CD4-positive, alpha-beta T cell (primary cell): ENCODE measurements at regions of chr11 and their contacts with region 1.

Region 1: GRCh38 chr11:65569973-65570918 is at the start of gene ZNRD2:
- DNase-seq: peak; percentile 96 to 100 (median 98)
- ATAC-seq: peak; percentile 71
- H3K4me3 ChIP-seq: peak within 1 kb of the TSS; percentile 89
- H3K4me3 Mint-ChIP-seq: peak within 1 kb of the TSS; percentile 100
- H3K27ac ChIP-seq: peak within 1 kb of the TSS; percentile 99 to 100
- H3K27ac Mint-ChIP-seq: peak within 1 kb of the TSS; percentile 98
- H3K4me1 ChIP-seq: peaks cover 87% of the 10 kb centered on the region
- H3K4me1 Mint-ChIP-seq: peaks cover 86% of the 10 kb centered on the region
- H3K27me3 ChIP-seq: no peaks in the 10 kb centered on the region
- H3K27me3 Mint-ChIP-seq: no peaks in the 10 kb centered on the region
- CTCF ChIP-seq: no peak
- total RNA-seq, gene ZNRD2: 38.7 to 39.9 TPM

Region 2: GRCh38 chr11:65141896-65142494 is 428.3 kb before region 1 on chr11:
- CTCF ChIA-PET with region 1: no interaction called
- POLR2A ChIA-PET with region 1: no interaction called
- intact Hi-C with region 1: no loop called
- DNase-seq: no peak
- ATAC-seq: no peak
- H3K4me3 ChIP-seq: no peak overlapping the region
- H3K4me3 Mint-ChIP-seq: no peak overlapping the region
- H3K27ac ChIP-seq: no peak overlapping the region
- H3K27ac Mint-ChIP-seq: no peak overlapping the region
- H3K4me1 ChIP-seq: no peaks in the 10 kb centered on the region
- H3K4me1 Mint-ChIP-seq: no peaks in the 10 kb centered on the region
- H3K27me3 ChIP-seq: no peaks in the 10 kb centered on the region
- H3K27me3 Mint-ChIP-seq: no peaks in the 10 kb centered on the region
- CTCF ChIP-seq: no peak

Region 3: GRCh38 chr11:65403607-65404121 is 166.6 kb before region 1 on chr11:
- CTCF ChIA-PET with region 1: no interaction called
- POLR2A ChIA-PET with region 1: no interaction called
- intact Hi-C with region 1: no loop called
- DNase-seq: peak in 2 of 14 experiments; percentile 47 to 49
- ATAC-seq: no peak
- H3K4me3 ChIP-seq: no peak overlapping the region
- H3K4me3 Mint-ChIP-seq: no peak overlapping the region
- H3K27ac ChIP-seq: peak overlapping the region in 1 of 2 donors; percentile 21
- H3K27ac Mint-ChIP-seq: peak overlapping the region; percentile 44
- H3K4me1 ChIP-seq: peaks cover 9% of the 10 kb centered on the region
- H3K4me1 Mint-ChIP-seq: peaks cover 5% of the 10 kb centered on the region
- H3K27me3 ChIP-seq: no peaks in the 10 kb centered on the region
- H3K27me3 Mint-ChIP-seq: no peaks in the 10 kb centered on the region
- CTCF ChIP-seq: no peak

Region 4: GRCh38 chr11:65418711-65419459 is 151.4 kb before region 1 on chr11:
- CTCF ChIA-PET with region 1: no interaction called
- POLR2A ChIA-PET with region 1: interaction called, 26 read pairs
- intact Hi-C with region 1: no loop called
- DNase-seq: peak in 12 of 14 experiments; percentile 56 to 94 (median 75)
- ATAC-seq: peak; percentile 2
- H3K4me3 ChIP-seq: peak overlapping the region; percentile 86
- H3K4me3 Mint-ChIP-seq: peak overlapping the region; percentile 92
- H3K27ac ChIP-seq: peak overlapping the region; percentile 99
- H3K27ac Mint-ChIP-seq: peak overlapping the region; percentile 96
- H3K4me1 ChIP-seq: peaks cover 74% of the 10 kb centered on the region
- H3K4me1 Mint-ChIP-seq: peaks cover 57% of the 10 kb centered on the region
- H3K27me3 ChIP-seq: no peaks in the 10 kb centered on the region
- H3K27me3 Mint-ChIP-seq: no peaks in the 10 kb centered on the region
- CTCF ChIP-seq: no peak

Region 5: DNA sequence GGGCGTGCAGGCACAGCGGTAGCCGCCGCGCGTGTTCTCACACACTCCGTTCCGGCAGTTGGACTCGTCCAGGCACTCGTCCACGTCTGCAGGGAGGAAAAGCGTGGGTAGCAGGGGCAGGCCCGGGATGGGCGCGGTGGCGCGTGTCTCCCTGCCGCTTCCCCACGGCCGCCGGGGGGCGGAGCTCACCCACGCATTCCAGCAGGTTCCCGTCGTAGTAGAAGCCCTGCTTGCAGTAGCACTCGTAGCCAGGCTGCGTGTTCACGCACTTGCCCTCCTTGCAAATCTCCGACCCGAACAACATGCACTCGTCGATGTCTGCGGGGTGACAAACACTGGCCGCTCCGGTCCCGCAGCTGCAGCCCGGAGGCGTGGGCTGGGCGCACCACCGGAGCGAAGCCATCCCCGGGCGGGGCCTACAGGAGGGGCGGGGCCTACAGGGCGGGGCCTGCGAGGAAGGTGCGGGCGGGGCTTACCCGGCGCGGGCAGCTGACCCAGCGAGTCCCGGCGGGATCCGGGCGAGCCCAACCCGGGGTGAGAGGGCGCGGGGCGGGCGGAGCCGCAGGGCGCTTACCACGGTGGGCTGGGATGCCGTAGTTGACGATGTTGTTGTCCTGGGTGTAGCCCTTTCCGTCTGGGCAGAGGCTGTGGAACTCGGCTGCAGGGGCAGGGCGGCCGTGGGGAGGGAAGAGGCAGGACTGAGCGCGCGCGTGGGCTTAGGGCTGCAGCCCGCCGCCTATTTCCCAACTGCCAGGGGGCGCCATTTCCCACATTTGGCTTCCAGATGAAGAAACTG is 29.8 kb before region 1 on chr11:
- CTCF ChIA-PET with region 1: interaction called, 64 read pairs
- POLR2A ChIA-PET with region 1: interaction called, 52 read pairs
- intact Hi-C with region 1: loop called (anchors 1 kb)
- DNase-seq: peak; percentile 81 to 94 (median 85)
- ATAC-seq: peak; percentile 82
- H3K4me3 ChIP-seq: peak overlapping the region; percentile 80
- H3K4me3 Mint-ChIP-seq: peak overlapping the region; percentile 90
- H3K27ac ChIP-seq: peak overlapping the region; percentile 14 to 64
- H3K27ac Mint-ChIP-seq: peak overlapping the region; percentile 65
- H3K4me1 ChIP-seq: peaks cover 23% of the 10 kb centered on the region
- H3K4me1 Mint-ChIP-seq: peaks cover 25% of the 10 kb centered on the region
- H3K27me3 ChIP-seq: no peaks in the 10 kb centered on the region
- H3K27me3 Mint-ChIP-seq: no peaks in the 10 kb centered on the region
- CTCF ChIP-seq: peak; percentile 79

Region 6: GRCh38 chr11:65558002-65558931 is 12.0 kb before region 1 on chr11 and contains the start of gene LTBP3:
- CTCF ChIA-PET with region 1: interaction called, 13 read pairs
- POLR2A ChIA-PET with region 1: interaction called, 31 read pairs
- intact Hi-C with region 1: loop called in 1 of 2 experiments (anchors 2 kb)
- DNase-seq: peak in 7 of 14 experiments; percentile 36 to 73 (median 65)
- ATAC-seq: peak; percentile 39
- H3K4me3 ChIP-seq: peak within 1 kb of the TSS; percentile 63
- H3K4me3 Mint-ChIP-seq: peak within 1 kb of the TSS; percentile 94
- H3K27ac ChIP-seq: peak within 1 kb of the TSS; percentile 80
- H3K27ac Mint-ChIP-seq: peak within 1 kb of the TSS; percentile 87
- H3K4me1 ChIP-seq: peaks cover 80% of the 10 kb centered on the region
- H3K4me1 Mint-ChIP-seq: peaks cover 59% of the 10 kb centered on the region
- H3K27me3 ChIP-seq: no peaks in the 10 kb centered on the region
- H3K27me3 Mint-ChIP-seq: no peaks in the 10 kb centered on the region
- CTCF ChIP-seq: no peak
- total RNA-seq, gene LTBP3: 236 to 238 TPM

Region 7: GRCh38 chr11:65615229-65615941 is 45.1 kb after region 1 on chr11 and contains the start of gene PCNX3:
- CTCF ChIA-PET with region 1: interaction called, 3 read pairs
- POLR2A ChIA-PET with region 1: interaction called, 60 read pairs
- intact Hi-C with region 1: loop called (anchors 1 to 2 kb)
- DNase-seq: peak; percentile 99 to 100 (median 100)
- ATAC-seq: peak; percentile 87
- H3K4me3 ChIP-seq: peak within 1 kb of the TSS; percentile 93
- H3K4me3 Mint-ChIP-seq: peak within 1 kb of the TSS; percentile 98
- H3K27ac ChIP-seq: peak within 1 kb of the TSS; percentile 94
- H3K27ac Mint-ChIP-seq: peak within 1 kb of the TSS; percentile 93
- H3K4me1 ChIP-seq: peaks cover 67% of the 10 kb centered on the region
- H3K4me1 Mint-ChIP-seq: peaks cover 46% of the 10 kb centered on the region
- H3K27me3 ChIP-seq: no peaks in the 10 kb centered on the region
- H3K27me3 Mint-ChIP-seq: no peaks in the 10 kb centered on the region
- CTCF ChIP-seq: no peak
- total RNA-seq, gene PCNX3: 37.3 to 40.5 TPM